Colonic mucosa (tissue), 4 donors: ENCODE measurements at regions of chr3 and their contacts with region 1.

Region 1: GRCh38 chr3:58630076-58630709 is 36.4 kb downstream of the FAM3D start:
- DNase-seq: peak; percentile 91
- H3K4me3 ChIP-seq: no peak overlapping the region
- H3K27ac ChIP-seq: peak overlapping the region; percentile 72
- H3K4me1 ChIP-seq: peaks cover 10% of the 10 kb centered on the region
- H3K27me3 ChIP-seq: no peaks in the 10 kb centered on the region
- CTCF ChIP-seq: peak; percentile 96

Region 2: GRCh38 chr3:58332575-58333188 is 297.5 kb before region 1 on chr3 and contains the start of gene PXK:
- intact Hi-C with region 1: loop called (anchors 10 kb)
- DNase-seq: peak; percentile 83
- H3K4me3 ChIP-seq: peak within 1 kb of the TSS; percentile 76
- H3K27ac ChIP-seq: peak within 1 kb of the TSS; percentile 55
- H3K4me1 ChIP-seq: no peaks in the 10 kb centered on the region
- H3K27me3 ChIP-seq: no peaks in the 10 kb centered on the region
- CTCF ChIP-seq: no peak
- total RNA-seq, gene PXK: 9.3 to 11.4 TPM

Region 3: GRCh38 chr3:58573640-58574039 is 56.6 kb before region 1 on chr3:
- intact Hi-C with region 1: loop called (anchors 5 kb)
- DNase-seq: no peak
- H3K4me3 ChIP-seq: no peak overlapping the region
- H3K27ac ChIP-seq: no peak overlapping the region
- H3K4me1 ChIP-seq: no peaks in the 10 kb centered on the region
- H3K27me3 ChIP-seq: no peaks in the 10 kb centered on the region
- CTCF ChIP-seq: no peak

Region 4: DNA sequence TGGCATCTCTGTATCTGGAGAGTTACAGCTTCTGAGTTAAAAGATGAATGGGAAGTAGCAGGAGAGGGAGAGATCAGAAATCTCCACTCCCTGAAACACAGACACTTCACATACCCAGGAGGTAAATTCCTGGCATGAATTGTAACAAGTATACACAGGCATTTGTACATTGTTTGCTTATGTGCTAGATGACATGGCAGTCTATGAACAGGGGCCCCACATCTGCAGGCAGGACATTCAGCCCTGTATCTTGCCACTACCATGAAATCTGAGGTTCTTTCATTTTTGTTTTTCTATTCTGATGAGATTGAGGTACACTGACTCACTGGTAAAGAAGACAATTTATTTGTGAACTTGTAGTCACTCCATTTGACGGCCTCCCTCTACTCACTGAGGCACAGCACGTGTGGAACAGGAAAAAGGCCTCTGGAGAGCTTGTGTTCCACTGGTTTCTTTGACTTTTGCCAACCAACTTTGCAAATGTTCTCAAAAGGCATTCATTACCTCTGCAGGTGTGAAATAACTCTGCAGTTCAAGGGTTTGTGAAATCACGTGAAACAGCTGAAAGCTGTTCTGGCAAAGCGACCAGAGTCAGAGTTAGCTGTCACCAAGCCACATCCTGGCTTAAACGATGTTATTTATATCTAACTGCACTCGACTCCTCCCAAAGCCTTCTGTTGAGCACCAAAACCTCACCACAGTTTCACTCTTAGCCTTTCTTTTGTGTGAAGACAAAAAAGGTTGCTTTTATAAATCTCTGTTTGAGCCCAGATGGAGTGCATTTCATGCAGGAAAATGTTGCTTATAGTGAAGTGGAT is 821.0 kb after region 1 on chr3:
- intact Hi-C with region 1: no loop called
- DNase-seq: peak; percentile 19
- H3K4me3 ChIP-seq: no peak overlapping the region
- H3K27ac ChIP-seq: peak overlapping the region; percentile 30
- H3K4me1 ChIP-seq: no peaks in the 10 kb centered on the region
- H3K27me3 ChIP-seq: no peaks in the 10 kb centered on the region
- CTCF ChIP-seq: no peak